ENCODE measurements at regions of chr19 and their contacts with region 1.

Region 1: GRCh38 chr19:10717356-10718204 is at the start of gene DNM2:
- DNase-seq: peak; percentile 100
- H3K4me3 ChIP-seq: peak within 1 kb of the TSS; percentile 96
- CTCF ChIP-seq: peak; percentile 71

Region 2: DNA sequence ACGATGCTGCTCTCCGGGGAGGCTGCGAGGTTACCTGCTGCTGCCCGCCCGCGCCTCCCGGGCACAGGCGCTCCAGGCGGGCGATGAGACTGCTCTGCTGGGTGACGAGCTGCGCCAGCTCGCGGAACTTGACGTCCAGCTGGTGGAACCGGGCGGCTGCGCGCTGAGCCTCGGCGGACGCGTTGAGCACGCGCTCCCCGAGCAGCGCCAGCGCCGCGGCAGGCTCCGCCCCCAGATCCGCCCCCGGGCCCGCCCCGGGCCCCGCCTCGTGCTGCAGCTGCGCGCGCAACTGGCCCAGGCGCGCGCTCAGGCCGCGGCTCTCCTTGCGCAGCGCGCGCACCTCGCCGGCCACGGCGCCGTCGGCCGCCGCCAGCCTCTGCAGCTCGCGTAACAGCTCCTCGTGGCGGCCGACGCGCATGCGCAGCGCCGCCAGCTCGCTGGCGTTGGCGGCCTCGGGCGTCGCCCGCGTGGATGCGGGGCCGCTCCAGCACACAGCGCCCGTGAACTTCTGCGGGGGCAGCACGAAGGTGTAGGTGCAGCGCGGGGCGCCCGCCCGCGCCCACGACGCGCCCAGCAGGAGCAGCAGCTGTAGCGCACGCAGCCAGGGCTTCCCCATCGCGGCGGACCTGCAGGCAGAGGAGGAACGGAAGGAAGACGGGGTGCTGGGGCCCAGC is 621.5 kb before region 1 on chr19:
- CTCF ChIA-PET with region 1: no interaction called
- POLR2A ChIA-PET with region 1: no interaction called
- DNase-seq: no peak
- H3K4me3 ChIP-seq: peak overlapping the region; percentile 59
- CTCF ChIP-seq: no peak

Region 3: DNA sequence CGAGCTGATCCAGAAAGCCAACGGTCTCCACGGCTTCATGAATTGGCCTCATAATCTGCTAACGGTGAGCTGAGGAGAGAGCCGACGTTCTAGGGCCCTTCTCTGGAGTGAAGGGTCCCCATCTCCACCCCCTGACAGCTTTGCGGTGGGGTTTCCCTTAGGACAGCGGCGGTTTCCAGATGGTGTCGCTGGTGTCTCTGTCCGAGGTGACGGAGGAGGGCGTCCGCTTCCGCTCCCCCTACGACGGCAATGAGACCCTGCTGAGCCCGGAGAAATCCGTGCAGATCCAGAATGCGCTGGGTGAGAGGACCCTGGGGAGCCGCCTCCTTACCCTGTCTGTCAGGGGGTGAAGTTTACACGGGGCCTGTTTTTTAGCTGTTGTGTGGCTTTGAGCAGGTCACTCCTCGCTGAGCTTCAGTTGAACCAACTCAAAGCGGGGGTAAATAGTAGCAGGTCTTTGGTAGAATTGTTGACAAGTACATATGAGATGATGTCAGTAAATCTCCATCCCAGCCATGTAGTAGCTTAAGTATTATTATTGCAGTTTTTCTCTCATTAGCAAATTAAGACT is 15.5 kb before region 1 on chr19:
- CTCF ChIA-PET with region 1: interaction called, 85 read pairs
- POLR2A ChIA-PET with region 1: interaction called, 4 read pairs
- DNase-seq: no peak
- H3K4me3 ChIP-seq: peak overlapping the region; percentile 98
- CTCF ChIP-seq: no peak

Region 4: DNA sequence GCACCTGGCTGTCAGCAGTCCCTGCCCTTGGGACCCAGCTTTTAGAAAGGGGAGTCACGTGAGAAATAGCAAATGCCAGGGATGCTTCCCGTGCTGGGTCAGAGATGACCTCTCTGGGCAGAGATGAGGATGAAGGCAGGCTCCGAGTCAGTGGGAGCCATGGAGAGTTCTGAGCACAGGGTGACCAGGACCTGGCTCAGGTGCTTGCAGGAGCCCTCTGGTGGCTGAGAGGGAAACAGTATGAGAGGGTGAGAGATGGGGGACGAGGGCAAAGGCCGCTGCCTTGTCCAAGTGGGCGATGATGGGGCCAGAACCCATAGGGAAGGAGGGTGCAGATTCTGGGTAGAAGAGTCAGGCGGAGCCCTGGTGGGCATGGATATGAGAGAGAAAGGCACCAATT is 102.6 kb after region 1 on chr19:
- CTCF ChIA-PET with region 1: interaction called, 10 read pairs
- POLR2A ChIA-PET with region 1: interaction called, 6 read pairs
- DNase-seq: no peak
- H3K4me3 ChIP-seq: no peak overlapping the region
- CTCF ChIP-seq: no peak

Region 5: GRCh38 chr19:10854350-10855089 is 136.9 kb after region 1 on chr19:
- CTCF ChIA-PET with region 1: interaction called, 13 read pairs
- POLR2A ChIA-PET with region 1: no interaction called
- DNase-seq: no peak
- H3K4me3 ChIP-seq: no peak overlapping the region
- CTCF ChIP-seq: no peak

Measured in AG04449 (cell line).